WTC11 (cell line): ENCODE measurements at regions of chr1 and their contacts with region 1.

Region 1: GRCh38 chr1:158117854-158118704 is 62.6 kb upstream of the CD1D start:
- DNase-seq: peak; percentile 87
- ATAC-seq: peak; percentile 81
- H3K4me3 Mint-ChIP-seq: peak overlapping the region; percentile 51
- H3K27ac Mint-ChIP-seq: no peak overlapping the region; the same call in none of the 2 replicates
- H3K4me1 Mint-ChIP-seq: peaks cover 61% of the 10 kb centered on the region
- H3K27me3 Mint-ChIP-seq: peaks cover 23% of the 10 kb centered on the region
- CTCF ChIP-seq: no peak; the same call in 1 of the 2 replicates

Region 2: DNA sequence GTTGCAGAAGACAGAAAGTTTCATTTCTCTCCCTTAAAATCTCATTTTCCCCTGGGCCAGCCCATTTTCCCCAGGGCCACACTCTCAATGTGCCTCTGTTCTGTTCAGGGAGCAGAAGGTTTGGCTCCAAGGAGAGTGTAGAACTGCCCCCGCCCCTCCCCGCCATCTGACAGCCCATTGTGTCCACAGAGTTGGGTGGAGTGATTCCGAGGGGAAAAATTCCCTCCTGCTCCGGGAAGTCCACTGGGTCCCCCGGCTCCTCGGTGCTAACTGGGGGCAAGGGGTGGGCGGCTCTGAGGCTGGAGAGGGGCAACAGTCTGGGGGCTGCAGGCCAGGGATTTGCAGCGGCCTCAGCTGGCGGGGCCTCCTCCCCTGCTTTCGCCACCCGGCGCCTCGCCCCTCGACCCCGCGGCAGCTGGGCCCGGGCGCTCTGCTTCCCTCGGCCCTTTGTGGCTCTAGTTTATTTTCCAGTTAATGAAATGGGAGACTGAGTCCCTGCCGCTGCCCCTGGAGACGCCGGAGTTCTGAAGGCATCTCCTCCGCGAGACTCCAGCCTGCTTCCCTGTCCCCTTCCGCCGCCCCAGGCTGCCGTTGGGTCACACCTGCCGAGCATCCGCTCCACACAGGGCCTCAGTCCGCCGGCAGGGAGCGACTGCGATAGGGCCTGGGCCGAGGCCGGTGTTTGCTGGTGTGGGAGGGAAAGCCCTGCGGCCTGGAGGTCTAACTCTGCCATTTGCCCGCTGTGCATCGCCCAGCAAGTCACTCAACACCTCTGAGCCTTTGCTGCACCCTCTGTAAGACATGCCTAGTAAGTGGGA is 139.3 kb before region 1 on chr1:
- CTCF ChIA-PET with region 1: interaction called, 70 read pairs
- POLR2A ChIA-PET with region 1: interaction called, 4 read pairs
- DNase-seq: peak; percentile 78
- ATAC-seq: peak; percentile 89
- H3K4me3 Mint-ChIP-seq: peak overlapping the region; percentile 49
- H3K27ac Mint-ChIP-seq: peak overlapping the region; percentile 31; the same call in 1 of the 2 replicates
- H3K4me1 Mint-ChIP-seq: peaks cover 60% of the 10 kb centered on the region
- H3K27me3 Mint-ChIP-seq: no peaks in the 10 kb centered on the region; the same call in 1 of the 2 replicates
- CTCF ChIP-seq: no peak

Region 3: GRCh38 chr1:158007667-158008386 is 110.3 kb before region 1 on chr1:
- CTCF ChIA-PET with region 1: interaction called, 15 read pairs
- POLR2A ChIA-PET with region 1: interaction called, 4 read pairs
- DNase-seq: no peak
- ATAC-seq: peak; percentile 8
- H3K4me3 Mint-ChIP-seq: no peak overlapping the region
- H3K27ac Mint-ChIP-seq: no peak overlapping the region
- H3K4me1 Mint-ChIP-seq: peaks cover 91% of the 10 kb centered on the region
- H3K27me3 Mint-ChIP-seq: no peaks in the 10 kb centered on the region
- CTCF ChIP-seq: no peak

Region 4: DNA sequence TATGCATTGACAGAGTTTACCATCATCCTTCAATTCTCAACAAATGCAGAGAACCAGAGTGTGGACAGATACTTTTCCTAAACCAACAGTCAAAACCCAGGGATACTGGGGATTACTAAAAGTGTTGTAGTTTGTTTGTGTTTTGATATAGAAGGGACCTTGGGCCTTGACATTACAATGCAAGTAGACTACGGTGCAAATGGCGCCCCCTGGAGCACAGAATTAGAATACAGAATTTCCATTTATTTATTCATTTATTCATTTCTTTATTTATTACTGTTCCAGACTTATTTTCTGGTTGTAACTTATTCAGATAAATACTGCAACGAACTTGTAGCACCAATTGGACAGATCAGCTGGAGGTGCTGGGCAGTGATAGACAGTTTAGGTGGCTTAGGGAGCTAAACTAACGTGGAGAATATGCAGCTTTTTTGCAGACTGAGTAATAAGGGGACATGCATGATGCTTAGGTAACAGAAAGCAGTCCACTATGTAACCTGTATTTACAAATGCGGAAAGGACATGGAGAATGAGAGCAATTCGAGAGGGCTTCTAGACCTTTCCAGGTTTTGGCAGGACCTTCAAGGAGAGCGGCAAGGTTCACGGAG is 82.0 kb before region 1 on chr1:
- CTCF ChIA-PET with region 1: interaction called, 12 read pairs
- POLR2A ChIA-PET with region 1: no interaction called
- DNase-seq: no peak
- ATAC-seq: no peak
- H3K4me3 Mint-ChIP-seq: no peak overlapping the region
- H3K27ac Mint-ChIP-seq: no peak overlapping the region
- H3K4me1 Mint-ChIP-seq: peaks cover 47% of the 10 kb centered on the region
- H3K27me3 Mint-ChIP-seq: no peaks in the 10 kb centered on the region
- CTCF ChIP-seq: peak; percentile 79

Region 5: GRCh38 chr1:158055854-158056253 is 62.2 kb before region 1 on chr1:
- CTCF ChIA-PET with region 1: interaction called, 14 read pairs
- POLR2A ChIA-PET with region 1: no interaction called
- DNase-seq: no peak
- ATAC-seq: peak; percentile 50; the same call in 1 of the 2 replicates
- H3K4me3 Mint-ChIP-seq: no peak overlapping the region
- H3K27ac Mint-ChIP-seq: peak overlapping the region; percentile 55; the same call in 1 of the 2 replicates
- H3K4me1 Mint-ChIP-seq: peaks cover 63% of the 10 kb centered on the region
- H3K27me3 Mint-ChIP-seq: no peaks in the 10 kb centered on the region
- CTCF ChIP-seq: no peak

Region 6: DNA sequence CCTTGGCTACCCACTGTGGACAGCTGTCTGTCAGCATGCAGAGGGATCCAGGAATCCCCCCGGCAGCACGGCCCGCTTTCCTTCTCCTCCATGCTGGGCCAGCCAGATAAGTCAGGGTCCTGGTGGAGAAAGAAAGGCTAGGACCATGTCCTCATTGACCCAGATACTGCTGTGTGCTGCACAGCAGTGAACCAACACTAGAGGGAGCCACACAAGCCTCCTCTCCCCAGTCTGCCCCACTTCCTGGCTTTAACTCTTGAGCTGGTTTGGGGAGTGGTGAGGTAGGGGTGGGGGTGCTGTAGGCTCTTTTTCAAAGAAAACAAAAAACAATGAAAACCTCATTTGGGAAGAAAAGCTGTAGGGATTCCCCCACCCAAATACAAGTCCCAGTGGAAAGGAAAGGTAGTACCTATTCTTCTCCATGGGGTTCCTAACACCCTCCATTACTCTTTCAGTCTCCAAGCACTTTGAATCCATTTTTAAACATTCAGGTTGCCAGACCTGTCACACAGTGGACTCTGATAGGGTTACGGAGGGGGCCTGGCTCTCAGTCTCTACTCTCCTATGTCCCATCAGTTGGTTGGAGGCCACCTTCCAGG is 22.2 kb before region 1 on chr1:
- CTCF ChIA-PET with region 1: interaction called, 443 read pairs
- POLR2A ChIA-PET with region 1: interaction called, 3 read pairs
- DNase-seq: peak; percentile 70
- ATAC-seq: peak; percentile 84
- H3K4me3 Mint-ChIP-seq: no peak overlapping the region
- H3K27ac Mint-ChIP-seq: no peak overlapping the region
- H3K4me1 Mint-ChIP-seq: peaks cover 51% of the 10 kb centered on the region
- H3K27me3 Mint-ChIP-seq: no peaks in the 10 kb centered on the region
- CTCF ChIP-seq: peak; percentile 75